Endothelial cell of umbilical vein (primary cell): ENCODE measurements at regions of chr1 and their contacts with region 1.

Region 1: GRCh38 chr1:46442317-46443161 is 47.1 kb upstream of the DMBX1 start:
- DNase-seq: peak; percentile 61
- H3K4me3 ChIP-seq: peak overlapping the region in 2 of 3 experiments; percentile 8 to 9
- H3K27ac ChIP-seq: no peak overlapping the region
- H3K4me1 ChIP-seq: no peaks in the 10 kb centered on the region
- H3K27me3 ChIP-seq: peaks cover 12% of the 10 kb centered on the region in 2 experiments
- CTCF ChIP-seq: peak; percentile 80 to 93
- POLR2A ChIP-seq: no peak

Region 2: DNA sequence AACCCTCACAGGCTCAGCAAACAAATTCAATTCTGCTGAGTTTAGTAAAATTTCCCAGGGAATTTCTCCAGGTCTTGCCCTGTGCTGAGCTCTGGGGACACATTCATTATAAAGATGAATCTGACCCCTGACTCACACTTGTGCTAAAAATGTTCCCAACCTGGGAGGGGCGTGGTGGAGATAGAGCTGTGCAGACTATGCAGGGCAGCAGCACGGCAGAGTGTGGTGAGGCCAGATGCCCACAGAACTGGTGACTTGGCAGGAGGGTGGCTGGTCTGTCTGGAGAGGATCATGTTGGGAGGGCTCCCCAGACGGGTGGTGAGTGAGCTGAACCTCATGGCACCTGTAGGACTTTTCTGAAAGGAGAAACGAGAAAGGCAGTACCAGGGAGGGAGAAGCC is 16.8 kb before region 1 on chr1:
- CTCF ChIA-PET with region 1: interaction called, 11 read pairs
- POLR2A ChIA-PET with region 1: no interaction called
- dilution Hi-C with region 1: no loop called
- intact Hi-C with region 1: no loop called
- DNase-seq: no peak
- H3K4me3 ChIP-seq: no peak overlapping the region
- H3K27ac ChIP-seq: no peak overlapping the region
- H3K4me1 ChIP-seq: no peaks in the 10 kb centered on the region
- H3K27me3 ChIP-seq: peaks cover 0 to 3% of the 10 kb centered on the region in 2 experiments
- CTCF ChIP-seq: no peak
- POLR2A ChIP-seq: no peak

Region 3: GRCh38 chr1:46477153-46477929 is 34.8 kb after region 1 on chr1:
- CTCF ChIA-PET with region 1: interaction called, 14 read pairs
- POLR2A ChIA-PET with region 1: no interaction called
- dilution Hi-C with region 1: no loop called
- intact Hi-C with region 1: no loop called
- DNase-seq: peak; percentile 63
- H3K4me3 ChIP-seq: no peak overlapping the region
- H3K27ac ChIP-seq: no peak overlapping the region
- H3K4me1 ChIP-seq: no peaks in the 10 kb centered on the region
- H3K27me3 ChIP-seq: peaks cover 36 to 39% of the 10 kb centered on the region in 2 experiments
- CTCF ChIP-seq: peak; percentile 81 to 90
- POLR2A ChIP-seq: no peak

Region 4: DNA sequence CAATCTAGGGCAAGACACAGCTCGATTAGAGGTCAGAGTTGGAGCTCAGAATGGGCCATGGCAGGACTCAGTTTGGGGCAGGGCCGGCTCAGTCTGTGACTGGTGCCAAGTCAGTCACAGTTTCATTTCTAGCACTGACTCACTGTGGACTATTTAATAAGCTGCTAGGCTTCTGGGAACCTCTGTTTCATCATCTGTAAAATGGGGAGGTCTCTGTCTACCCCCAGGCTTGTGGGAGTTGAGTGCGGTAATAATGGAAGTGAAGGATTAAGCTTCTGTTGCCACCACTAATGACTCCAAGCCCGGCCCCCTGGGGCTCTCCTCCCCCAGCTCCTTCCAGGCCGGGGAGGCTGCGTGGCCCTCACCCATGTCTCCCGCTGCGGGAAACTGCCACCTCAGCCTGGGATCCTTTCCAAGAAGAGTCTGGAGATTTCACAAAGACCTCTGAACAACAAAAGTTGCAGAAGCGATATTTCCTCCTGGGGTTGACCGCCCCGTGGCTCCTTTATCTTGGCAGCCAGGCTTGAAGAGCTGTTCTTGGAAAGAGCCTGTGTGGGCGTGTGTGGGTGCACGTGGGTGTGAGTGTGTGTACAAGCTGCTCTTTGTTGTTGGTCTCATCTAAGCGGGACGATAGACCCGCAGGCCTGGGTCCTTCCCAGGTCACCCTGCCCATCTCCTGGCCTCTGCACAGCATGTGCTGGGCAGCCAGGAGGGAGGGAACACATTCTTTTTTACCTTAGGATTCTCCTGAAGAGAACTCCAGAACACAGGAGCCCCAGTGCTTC is 79.8 kb after region 1 on chr1:
- CTCF ChIA-PET with region 1: interaction called, 165 read pairs
- POLR2A ChIA-PET with region 1: no interaction called
- dilution Hi-C with region 1: no loop called
- intact Hi-C with region 1: no loop called
- DNase-seq: no peak
- H3K4me3 ChIP-seq: no peak overlapping the region
- H3K27ac ChIP-seq: no peak overlapping the region
- H3K4me1 ChIP-seq: no peaks in the 10 kb centered on the region
- H3K27me3 ChIP-seq: peaks cover 45 to 46% of the 10 kb centered on the region in 2 experiments
- CTCF ChIP-seq: no peak
- POLR2A ChIP-seq: no peak

Region 5: DNA sequence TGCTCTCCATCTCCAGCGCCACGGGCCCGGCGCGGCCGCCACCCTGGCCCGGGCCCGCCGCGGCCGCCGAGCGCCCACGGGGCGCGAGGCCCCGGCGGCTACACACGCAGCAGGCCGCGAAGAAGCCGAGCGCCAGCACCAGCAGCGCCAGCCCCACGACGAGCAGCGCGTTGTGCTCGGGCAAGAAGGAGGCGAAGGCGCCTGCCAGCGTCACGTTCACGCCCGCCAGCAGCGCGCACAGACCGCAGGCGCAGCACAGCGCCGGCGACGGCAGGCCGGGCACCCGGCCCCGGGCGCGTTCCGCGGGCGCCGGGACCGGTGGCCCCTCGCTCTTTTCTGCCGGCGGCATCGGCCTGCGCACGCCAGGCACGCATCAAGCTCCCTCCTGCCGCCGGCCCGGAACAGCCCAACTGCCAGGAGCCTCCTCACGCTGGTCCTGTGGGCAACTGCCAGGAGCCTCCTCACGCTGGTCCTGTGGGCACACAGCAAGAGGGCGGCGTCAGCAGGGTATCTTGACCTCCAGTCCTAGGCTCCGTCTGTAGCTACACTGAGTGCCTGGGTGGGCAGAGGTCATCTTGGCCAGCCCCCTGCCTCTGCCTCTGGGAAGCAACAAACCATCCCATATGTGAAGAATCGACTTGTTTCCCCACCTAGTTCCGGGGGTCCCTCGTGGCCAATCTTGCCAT is 90.8 kb after region 1 on chr1:
- CTCF ChIA-PET with region 1: interaction called, 165 read pairs
- POLR2A ChIA-PET with region 1: no interaction called
- dilution Hi-C with region 1: no loop called
- intact Hi-C with region 1: loop called (anchors 1 kb)
- DNase-seq: peak; percentile 30
- H3K4me3 ChIP-seq: peak overlapping the region in 2 of 3 experiments; percentile 11 to 14
- H3K27ac ChIP-seq: no peak overlapping the region
- H3K4me1 ChIP-seq: peaks cover 2% of the 10 kb centered on the region
- H3K27me3 ChIP-seq: peaks cover 25 to 42% of the 10 kb centered on the region in 2 experiments
- CTCF ChIP-seq: no peak
- POLR2A ChIP-seq: no peak

Region 6: DNA sequence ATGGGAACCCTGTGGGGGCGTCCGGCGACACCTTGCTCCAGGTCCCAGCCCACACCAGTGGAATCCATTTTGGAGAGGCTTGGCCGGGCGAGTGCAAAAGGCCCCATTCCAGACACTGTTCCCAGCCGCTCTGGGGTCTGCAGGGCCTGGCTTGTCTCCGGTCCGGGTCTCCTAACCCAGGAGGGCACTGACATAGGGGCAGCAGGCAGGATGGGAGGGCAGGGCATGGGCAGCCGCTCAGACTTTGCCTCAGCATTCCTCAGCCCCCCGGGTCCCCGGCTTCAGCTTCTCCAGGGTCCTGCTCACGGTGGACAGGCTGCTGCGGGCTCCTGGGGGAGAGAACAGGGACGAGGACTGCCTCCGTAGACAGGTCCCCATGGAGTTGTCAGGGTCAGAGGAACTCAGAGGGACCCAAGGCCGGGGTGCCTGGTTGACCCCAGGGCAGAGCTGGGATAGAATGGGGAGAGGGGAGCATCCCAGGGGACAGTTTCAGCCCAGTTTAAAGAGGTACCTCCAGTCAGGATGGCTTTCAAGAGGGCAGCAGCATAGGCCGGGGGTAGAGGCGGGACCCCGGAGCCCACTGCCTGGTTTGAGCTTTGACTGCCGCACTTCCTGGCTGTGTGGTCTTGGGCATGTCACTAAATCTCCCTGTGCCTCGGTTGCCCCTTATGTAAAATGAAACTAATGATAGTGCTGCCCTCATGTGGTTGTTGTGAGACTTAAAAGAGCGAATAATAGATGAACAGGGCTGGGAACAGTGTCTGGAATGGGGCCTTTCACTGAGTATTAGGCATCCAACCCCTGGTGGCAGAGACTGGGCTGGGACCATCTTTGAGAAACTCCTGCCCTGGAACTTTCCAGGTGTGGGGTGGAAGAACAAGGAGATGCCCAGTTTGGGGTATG is 105.2 kb after region 1 on chr1:
- CTCF ChIA-PET with region 1: interaction called, 12 read pairs
- POLR2A ChIA-PET with region 1: no interaction called
- dilution Hi-C with region 1: no loop called
- intact Hi-C with region 1: loop called (anchors 1 kb)
- DNase-seq: peak; percentile 48
- H3K4me3 ChIP-seq: no peak overlapping the region
- H3K27ac ChIP-seq: no peak overlapping the region
- H3K4me1 ChIP-seq: no peaks in the 10 kb centered on the region
- H3K27me3 ChIP-seq: peaks cover 45 to 46% of the 10 kb centered on the region in 2 experiments
- CTCF ChIP-seq: peak; percentile 36
- POLR2A ChIP-seq: no peak